Activated CD4-positive, alpha-beta T cell treated with anti-CD3 and anti-CD28 coated beads, Interleukin-2, amount 10 ng/mL, durations not matched to agents 7 days and 5 days (primary cell): ENCODE measurements at regions of chr19 and their contacts with region 1.

Region 1: GRCh38 chr19:16330368-16330801 is 5.8 kb downstream of the KLF2 start:
- DNase-seq: peak; percentile 94
- H3K4me3 Mint-ChIP-seq: peak overlapping the region; percentile 100
- H3K27ac Mint-ChIP-seq: peak overlapping the region; percentile 99
- H3K4me1 Mint-ChIP-seq: peaks cover 55% of the 10 kb centered on the region
- H3K27me3 Mint-ChIP-seq: peaks cover 13% of the 10 kb centered on the region

Region 2: DNA sequence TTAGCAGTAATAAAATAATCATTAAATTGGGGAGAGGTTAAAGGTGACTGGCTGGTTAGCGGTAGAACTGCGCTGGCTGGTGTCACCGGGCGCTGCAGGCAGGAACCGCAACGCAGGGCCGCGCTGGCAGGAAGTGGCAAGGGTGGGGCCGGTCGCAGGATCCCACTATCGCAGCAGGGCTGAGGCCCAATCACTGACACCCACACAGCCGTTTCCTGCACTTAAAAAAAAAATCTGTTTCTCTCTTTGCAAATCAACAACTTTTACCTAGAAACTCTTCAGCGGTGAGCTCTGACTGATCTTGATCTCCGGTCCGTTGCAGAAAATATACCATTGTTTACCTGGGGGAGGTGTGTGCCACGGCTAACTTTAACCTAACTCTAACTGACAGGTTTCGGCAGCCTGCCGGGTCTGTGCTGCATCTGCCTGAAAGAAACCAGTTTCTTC is 41.2 kb after region 1 on chr19:
- CTCF ChIA-PET with region 1: interaction called, 15 read pairs
- POLR2A ChIA-PET with region 1: interaction called, 50 read pairs
- DNase-seq: peak; percentile 94
- H3K4me3 Mint-ChIP-seq: no peak overlapping the region
- H3K27ac Mint-ChIP-seq: no peak overlapping the region
- H3K4me1 Mint-ChIP-seq: peaks cover 45% of the 10 kb centered on the region
- H3K27me3 Mint-ChIP-seq: no peaks in the 10 kb centered on the region

Region 3: DNA sequence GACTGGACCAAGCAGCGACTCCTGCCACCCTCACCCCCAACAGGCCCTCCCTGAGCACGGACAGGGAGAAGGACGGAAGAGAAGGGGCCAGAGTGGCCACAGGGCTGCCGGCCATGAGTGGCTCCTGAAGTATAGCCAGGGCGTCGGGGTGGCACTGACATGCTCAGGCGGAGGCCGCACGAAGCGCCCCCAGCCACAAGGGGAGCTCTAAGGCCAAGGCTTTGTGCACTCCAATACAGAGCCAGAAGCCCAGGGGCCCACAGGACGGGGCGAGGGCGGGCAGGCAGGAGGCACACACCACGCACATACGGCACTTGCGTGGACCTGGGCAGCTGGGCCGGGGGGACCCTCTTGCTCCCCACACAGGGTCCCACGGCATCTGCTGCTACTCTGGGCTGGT is 46.3 kb after region 1 on chr19:
- CTCF ChIA-PET with region 1: interaction called, 15 read pairs
- POLR2A ChIA-PET with region 1: interaction called, 50 read pairs
- DNase-seq: peak; percentile 36
- H3K4me3 Mint-ChIP-seq: no peak overlapping the region
- H3K27ac Mint-ChIP-seq: no peak overlapping the region
- H3K4me1 Mint-ChIP-seq: peaks cover 78% of the 10 kb centered on the region
- H3K27me3 Mint-ChIP-seq: no peaks in the 10 kb centered on the region

Region 4: DNA sequence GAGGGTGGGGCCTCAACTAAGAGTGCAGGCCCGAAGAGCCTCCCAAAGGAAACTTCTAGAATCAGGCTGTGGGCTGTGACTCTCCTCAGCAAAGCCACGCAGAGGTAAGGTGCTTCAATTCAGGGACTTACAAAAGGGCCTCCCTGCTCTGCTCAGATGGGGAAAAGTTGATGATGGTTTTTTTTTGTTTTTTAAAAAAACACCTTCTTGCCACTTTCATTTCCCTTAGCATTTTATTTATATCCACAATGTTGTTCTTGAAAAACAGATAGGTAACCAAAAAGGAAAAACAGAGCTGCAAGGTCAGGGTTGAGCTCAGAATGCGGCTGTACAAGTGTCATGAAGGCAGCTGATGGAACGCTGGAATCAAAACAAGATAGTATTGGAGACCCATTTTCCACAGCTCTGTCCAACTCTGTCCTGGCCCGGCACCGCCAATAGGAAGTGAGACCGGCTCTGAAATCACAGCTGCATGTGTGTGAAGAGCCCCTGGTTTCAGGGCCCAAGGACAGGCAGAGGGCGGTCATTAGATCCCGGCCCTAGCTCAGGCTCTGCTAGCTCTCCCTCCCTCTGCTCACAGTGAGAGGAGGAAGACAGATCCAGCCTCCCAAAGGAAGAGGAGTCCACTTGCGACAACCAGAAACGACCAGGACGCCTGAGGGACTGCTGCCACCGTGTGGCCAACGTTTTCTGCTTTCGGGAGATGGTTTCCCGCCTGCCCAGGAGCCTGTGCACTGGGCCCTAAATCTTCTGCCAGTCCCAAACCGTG is 52.6 kb after region 1 on chr19:
- CTCF ChIA-PET with region 1: interaction called, 14 read pairs
- POLR2A ChIA-PET with region 1: interaction called, 9 read pairs
- DNase-seq: peak; percentile 85
- H3K4me3 Mint-ChIP-seq: peak overlapping the region; percentile 64
- H3K27ac Mint-ChIP-seq: peak overlapping the region; percentile 92
- H3K4me1 Mint-ChIP-seq: peaks cover 68% of the 10 kb centered on the region
- H3K27me3 Mint-ChIP-seq: no peaks in the 10 kb centered on the region

Region 5: DNA sequence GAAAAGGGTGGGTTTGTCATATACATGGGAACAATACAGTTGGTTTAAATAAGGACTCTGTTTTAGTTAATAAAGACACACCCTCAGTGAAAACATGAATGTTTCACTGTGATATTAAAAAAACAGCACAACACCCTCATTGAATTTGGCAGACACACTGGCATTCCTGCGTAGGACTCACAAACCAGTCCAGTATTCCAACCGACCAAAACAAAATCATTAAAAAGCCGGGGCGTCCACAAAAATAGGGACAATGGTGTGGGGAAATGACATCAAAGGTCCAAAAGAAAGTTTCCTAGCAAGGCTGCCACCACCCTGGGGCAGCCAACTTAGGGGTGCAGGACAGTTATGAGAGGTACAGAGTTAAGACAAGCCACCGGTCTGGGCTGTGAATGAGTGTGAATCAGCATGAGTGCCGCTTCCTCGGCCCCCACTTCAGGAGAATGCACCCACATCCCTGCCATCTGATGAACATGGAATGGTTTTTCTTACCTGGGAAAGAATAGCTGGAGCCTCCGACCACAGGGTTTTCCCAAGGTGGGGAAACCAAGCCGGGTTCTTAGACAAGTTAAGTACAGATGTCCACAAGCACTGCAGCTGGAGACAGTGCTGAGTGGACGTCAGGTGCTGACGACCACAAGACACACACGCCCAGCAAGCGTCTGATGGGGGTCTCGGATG is 67.5 kb after region 1 on chr19:
- CTCF ChIA-PET with region 1: no interaction called
- POLR2A ChIA-PET with region 1: no interaction called
- DNase-seq: no peak
- H3K4me3 Mint-ChIP-seq: no peak overlapping the region
- H3K27ac Mint-ChIP-seq: no peak overlapping the region
- H3K4me1 Mint-ChIP-seq: peaks cover 19% of the 10 kb centered on the region
- H3K27me3 Mint-ChIP-seq: no peaks in the 10 kb centered on the region

Region 6: DNA sequence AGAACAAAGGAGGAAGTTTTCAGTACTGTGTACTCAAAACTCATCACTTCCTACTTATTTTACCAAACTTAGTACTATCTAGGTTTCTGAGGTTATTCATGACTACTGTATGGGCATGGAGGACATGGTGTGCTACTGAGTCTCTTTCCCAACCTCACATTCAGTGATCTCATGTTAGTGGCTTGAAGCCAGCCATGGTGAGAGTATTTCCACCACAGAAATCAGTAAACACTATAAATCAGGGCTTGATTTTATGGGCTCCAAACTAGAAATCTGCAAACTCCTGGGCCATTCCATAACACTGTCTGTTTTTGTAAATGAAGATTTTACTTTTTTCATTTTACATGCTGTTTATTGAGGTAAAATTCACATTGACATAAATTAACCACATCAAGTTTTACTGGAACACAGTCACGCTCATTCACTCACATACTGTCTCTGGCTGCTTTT is 277.9 kb after region 1 on chr19:
- CTCF ChIA-PET with region 1: no interaction called
- POLR2A ChIA-PET with region 1: no interaction called
- DNase-seq: no peak
- H3K4me3 Mint-ChIP-seq: no peak overlapping the region
- H3K27ac Mint-ChIP-seq: no peak overlapping the region
- H3K4me1 Mint-ChIP-seq: peaks cover 49% of the 10 kb centered on the region
- H3K27me3 Mint-ChIP-seq: no peaks in the 10 kb centered on the region

Region 7: GRCh38 chr19:16676101-16676792 is 345.9 kb after region 1 on chr19:
- CTCF ChIA-PET with region 1: no interaction called
- POLR2A ChIA-PET with region 1: no interaction called
- DNase-seq: no peak
- H3K4me3 Mint-ChIP-seq: no peak overlapping the region
- H3K27ac Mint-ChIP-seq: no peak overlapping the region
- H3K4me1 Mint-ChIP-seq: no peaks in the 10 kb centered on the region
- H3K27me3 Mint-ChIP-seq: no peaks in the 10 kb centered on the region